CD8-positive, alpha-beta T cell (primary cell): ENCODE measurements at regions of chr1 and their contacts with region 1.

Region 1: GRCh38 chr1:110674337-110675059 is at the start of gene KCNA3:
- DNase-seq: peak; percentile 52 to 87 (median 73)
- ATAC-seq: peak; percentile 42
- H3K4me3 ChIP-seq: peak within 1 kb of the TSS; percentile 75 to 97
- H3K4me3 Mint-ChIP-seq: peak within 1 kb of the TSS; percentile 100
- H3K27ac ChIP-seq: peak within 1 kb of the TSS; percentile 93 to 95
- H3K27ac Mint-ChIP-seq: peak within 1 kb of the TSS; percentile 99
- H3K4me1 ChIP-seq: peaks cover 22% of the 10 kb centered on the region
- H3K4me1 Mint-ChIP-seq: peaks cover 40% of the 10 kb centered on the region
- H3K27me3 ChIP-seq: no peaks in the 10 kb centered on the region
- H3K27me3 Mint-ChIP-seq: no peaks in the 10 kb centered on the region
- CTCF ChIP-seq: peak; percentile 28
- total RNA-seq, gene KCNA3: 83.6 to 85.1 TPM

Region 2: GRCh38 chr1:110630839-110631663 is 43.4 kb before region 1 on chr1:
- CTCF ChIA-PET with region 1: interaction called, 10 read pairs
- POLR2A ChIA-PET with region 1: interaction called, 50 read pairs
- intact Hi-C with region 1: loop called (anchors 1 kb)
- DNase-seq: peak; percentile 66 to 94 (median 85)
- ATAC-seq: peak; percentile 72
- H3K4me3 ChIP-seq: peak overlapping the region; percentile 27
- H3K4me3 Mint-ChIP-seq: no peak overlapping the region
- H3K27ac ChIP-seq: peak overlapping the region; percentile 28 to 55
- H3K27ac Mint-ChIP-seq: no peak overlapping the region
- H3K4me1 ChIP-seq: peaks cover 55% of the 10 kb centered on the region
- H3K4me1 Mint-ChIP-seq: peaks cover 46% of the 10 kb centered on the region
- H3K27me3 ChIP-seq: no peaks in the 10 kb centered on the region
- H3K27me3 Mint-ChIP-seq: no peaks in the 10 kb centered on the region
- CTCF ChIP-seq: peak; percentile 70

Region 3: GRCh38 chr1:110686188-110686587 is 11.7 kb after region 1 on chr1:
- CTCF ChIA-PET with region 1: interaction called, 14 read pairs
- POLR2A ChIA-PET with region 1: interaction called, 11 read pairs
- intact Hi-C with region 1: loop called in 1 of 2 experiments (anchors 1 kb)
- DNase-seq: peak in 7 of 9 experiments; percentile 10 to 65 (median 36)
- ATAC-seq: peak; percentile 84
- H3K4me3 ChIP-seq: no peak overlapping the region
- H3K4me3 Mint-ChIP-seq: no peak overlapping the region
- H3K27ac ChIP-seq: no peak overlapping the region
- H3K27ac Mint-ChIP-seq: no peak overlapping the region
- H3K4me1 ChIP-seq: no peaks in the 10 kb centered on the region
- H3K4me1 Mint-ChIP-seq: peaks cover 4% of the 10 kb centered on the region
- H3K27me3 ChIP-seq: no peaks in the 10 kb centered on the region
- H3K27me3 Mint-ChIP-seq: no peaks in the 10 kb centered on the region
- CTCF ChIP-seq: peak; percentile 34

Region 4: GRCh38 chr1:110736900-110737605 is 62.6 kb after region 1 on chr1:
- CTCF ChIA-PET with region 1: no interaction called
- POLR2A ChIA-PET with region 1: no interaction called
- intact Hi-C with region 1: no loop called
- DNase-seq: no peak
- ATAC-seq: no peak
- H3K4me3 ChIP-seq: no peak overlapping the region
- H3K4me3 Mint-ChIP-seq: no peak overlapping the region
- H3K27ac ChIP-seq: no peak overlapping the region
- H3K27ac Mint-ChIP-seq: no peak overlapping the region
- H3K4me1 ChIP-seq: no peaks in the 10 kb centered on the region
- H3K4me1 Mint-ChIP-seq: no peaks in the 10 kb centered on the region
- H3K27me3 ChIP-seq: no peaks in the 10 kb centered on the region
- H3K27me3 Mint-ChIP-seq: no peaks in the 10 kb centered on the region
- CTCF ChIP-seq: no peak

Region 5: DNA sequence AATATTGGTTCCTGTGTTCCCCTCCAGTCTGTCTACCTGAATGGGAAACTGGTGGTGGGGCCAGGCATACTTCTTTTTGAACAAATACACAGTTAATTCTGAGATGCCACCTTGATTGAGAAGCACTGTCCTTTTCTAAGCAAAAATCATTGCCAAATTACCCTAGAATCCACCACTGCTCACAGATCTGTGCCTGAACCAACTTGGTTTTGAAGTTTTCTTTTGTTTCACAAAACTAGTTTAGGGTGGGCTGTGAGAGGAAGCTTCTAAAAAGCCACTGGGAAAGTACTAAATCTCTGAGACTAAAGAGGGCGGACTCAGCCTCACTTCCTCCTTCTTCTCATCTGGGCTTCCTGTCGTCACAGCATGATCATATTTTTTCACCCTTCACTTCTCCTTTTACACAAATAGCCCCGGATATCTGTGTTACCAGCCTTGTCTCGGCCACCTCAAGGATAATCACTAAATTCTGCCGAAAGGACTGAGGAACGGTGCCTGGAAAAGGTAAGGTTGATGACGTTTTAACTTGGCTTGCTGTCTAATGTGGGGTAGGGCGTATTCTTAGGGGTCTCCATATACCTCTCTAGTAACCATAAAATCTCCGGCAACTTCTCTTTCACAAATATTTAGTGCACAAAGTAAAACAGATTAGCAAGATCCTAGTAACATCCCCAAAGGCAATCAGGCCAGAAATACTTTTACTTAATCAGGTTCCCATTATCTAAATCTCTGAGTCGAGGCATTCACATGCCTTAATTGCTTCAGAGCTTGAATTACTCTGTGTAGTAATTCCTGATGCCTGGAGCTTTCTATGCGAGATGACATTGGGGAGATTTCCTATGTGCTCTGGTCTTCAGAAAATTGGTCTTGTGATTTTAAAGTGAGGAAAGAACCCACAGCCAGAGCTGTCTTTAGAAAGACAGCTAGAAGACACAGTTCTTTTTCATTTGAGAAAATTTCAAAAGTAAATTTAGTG is 198.5 kb after region 1 on chr1 and contains the start of gene CD53:
- CTCF ChIA-PET with region 1: no interaction called
- POLR2A ChIA-PET with region 1: no interaction called
- intact Hi-C with region 1: loop called (anchors 2 kb)
- DNase-seq: peak in 8 of 9 experiments; percentile 39 to 92 (median 66)
- ATAC-seq: peak; percentile 70
- H3K4me3 ChIP-seq: peak within 1 kb of the TSS; percentile 83 to 86
- H3K4me3 Mint-ChIP-seq: peak within 1 kb of the TSS; percentile 96
- H3K27ac ChIP-seq: peak within 1 kb of the TSS; percentile 95 to 96
- H3K27ac Mint-ChIP-seq: peak within 1 kb of the TSS; percentile 98
- H3K4me1 ChIP-seq: peaks cover 49% of the 10 kb centered on the region
- H3K4me1 Mint-ChIP-seq: peaks cover 63% of the 10 kb centered on the region
- H3K27me3 ChIP-seq: no peaks in the 10 kb centered on the region
- H3K27me3 Mint-ChIP-seq: no peaks in the 10 kb centered on the region
- CTCF ChIP-seq: no peak
- total RNA-seq, gene CD53: 205 to 213 TPM

Region 6: DNA sequence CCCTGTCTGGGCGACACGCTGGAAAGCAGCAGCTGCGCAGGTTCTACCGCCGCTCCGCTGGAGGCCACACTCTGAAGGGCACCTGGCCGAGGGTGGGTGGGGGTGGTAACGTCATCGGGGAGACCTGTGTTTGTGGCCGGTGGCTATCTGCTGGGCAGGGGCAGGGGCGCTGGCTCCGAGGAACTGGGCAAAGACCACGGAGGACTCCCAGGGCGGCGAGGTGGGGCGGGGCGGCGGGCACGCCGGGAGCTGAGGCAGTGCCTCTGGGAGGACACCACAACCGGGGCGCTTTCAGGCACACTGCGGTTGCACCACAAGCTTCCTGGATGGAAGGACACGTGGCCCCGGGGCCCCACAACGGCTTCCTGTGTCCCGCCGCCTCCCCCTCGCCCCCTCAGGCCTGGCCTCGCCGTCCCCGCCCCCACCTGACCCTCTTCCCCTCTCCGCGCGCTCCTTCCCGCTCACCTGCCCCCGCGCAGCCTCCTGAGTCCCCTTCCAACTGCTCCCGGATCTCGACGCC is 529.2 kb after region 1 on chr1:
- CTCF ChIA-PET with region 1: no interaction called
- POLR2A ChIA-PET with region 1: no interaction called
- intact Hi-C with region 1: loop called (anchors 5 to 10 kb)
- DNase-seq: peak; percentile 60 to 92 (median 88)
- ATAC-seq: peak; percentile 41
- H3K4me3 ChIP-seq: peak overlapping the region; percentile 74 to 93
- H3K4me3 Mint-ChIP-seq: peak overlapping the region; percentile 94
- H3K27ac ChIP-seq: peak overlapping the region; percentile 74 to 84
- H3K27ac Mint-ChIP-seq: peak overlapping the region; percentile 97
- H3K4me1 ChIP-seq: peaks cover 54% of the 10 kb centered on the region
- H3K4me1 Mint-ChIP-seq: peaks cover 76% of the 10 kb centered on the region
- H3K27me3 ChIP-seq: no peaks in the 10 kb centered on the region
- H3K27me3 Mint-ChIP-seq: no peaks in the 10 kb centered on the region
- CTCF ChIP-seq: no peak